Uterus (tissue), 4 donors: ENCODE measurements at regions of chr12 and their contacts with region 1.

Region 1: DNA sequence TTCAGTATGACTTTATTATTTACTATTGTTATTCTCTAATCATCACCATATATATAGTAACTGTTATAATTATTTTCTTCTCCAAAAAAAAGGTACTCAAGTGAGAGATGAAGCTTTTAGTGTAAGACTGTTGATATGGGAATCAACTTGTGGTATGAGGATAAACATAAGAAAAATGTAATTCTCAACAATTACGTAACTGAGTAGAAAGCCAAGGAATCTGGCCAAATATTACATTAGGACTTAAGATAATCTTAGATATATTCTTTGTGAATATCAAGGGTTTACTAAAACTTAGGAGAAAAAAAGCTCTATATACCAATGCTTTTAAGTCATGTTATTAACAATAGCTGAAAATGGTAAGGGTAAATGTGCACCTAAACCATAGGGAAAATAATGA is 13.3 kb downstream of the SENP1 start:
- DNase-seq: no peak
- H3K4me3 ChIP-seq: no peak overlapping the region
- H3K27ac ChIP-seq: no peak overlapping the region
- H3K4me1 ChIP-seq: no peaks in the 10 kb centered on the region
- H3K27me3 ChIP-seq: no peaks in the 10 kb centered on the region
- CTCF ChIP-seq: no peak
- POLR2A ChIP-seq: no peak

Region 2: DNA sequence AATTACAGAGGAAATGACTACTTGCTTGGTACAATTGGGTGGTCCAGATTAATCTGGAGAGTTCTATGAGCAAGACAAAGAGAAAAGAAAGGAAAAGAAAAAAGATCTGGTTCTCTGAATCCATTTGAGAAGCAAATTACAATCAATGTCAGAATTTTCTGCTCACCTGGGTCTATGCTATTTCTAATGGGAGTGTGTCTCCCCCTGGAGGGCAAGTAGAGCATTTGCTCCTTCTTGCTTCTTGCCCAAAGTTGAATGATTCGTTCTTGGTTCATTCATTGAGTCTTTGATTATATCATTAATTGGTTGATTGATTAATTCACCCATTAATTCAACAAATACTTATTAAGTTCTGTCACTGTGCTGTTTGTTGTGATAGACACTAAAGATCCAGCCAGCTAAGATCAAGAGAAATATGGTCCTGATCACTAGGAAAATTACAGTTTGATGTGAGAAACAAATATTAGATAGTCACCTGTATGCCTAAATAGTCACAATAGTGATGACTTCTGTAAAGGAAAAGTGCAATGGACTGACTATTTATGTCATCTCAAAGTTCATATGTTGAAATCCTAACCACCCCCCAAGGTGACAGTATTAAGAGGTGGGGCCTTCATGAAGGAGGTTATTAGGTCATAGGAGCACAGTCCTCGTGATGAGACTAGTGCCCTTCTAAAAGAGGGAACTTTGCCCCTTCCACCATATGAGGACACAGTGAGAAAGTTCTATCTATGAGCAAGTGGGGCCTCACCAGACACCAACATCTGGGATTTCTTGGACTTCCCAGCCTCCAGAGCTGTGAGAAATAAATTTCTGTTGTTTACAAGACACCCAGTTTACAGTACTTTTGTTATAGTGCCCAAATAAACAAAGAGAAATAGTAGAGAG is 72.7 kb after region 1 on chr12:
- intact Hi-C with region 1: loop called (anchors 10 kb)
- DNase-seq: no peak
- H3K4me3 ChIP-seq: no peak overlapping the region
- H3K27ac ChIP-seq: no peak overlapping the region
- H3K4me1 ChIP-seq: no peaks in the 10 kb centered on the region
- H3K27me3 ChIP-seq: no peaks in the 10 kb centered on the region
- CTCF ChIP-seq: peak; percentile 72 to 86 (median 82)
- POLR2A ChIP-seq: no peak